ENCODE measurements at regions of chr3 and their contacts with region 1.

Region 1: DNA sequence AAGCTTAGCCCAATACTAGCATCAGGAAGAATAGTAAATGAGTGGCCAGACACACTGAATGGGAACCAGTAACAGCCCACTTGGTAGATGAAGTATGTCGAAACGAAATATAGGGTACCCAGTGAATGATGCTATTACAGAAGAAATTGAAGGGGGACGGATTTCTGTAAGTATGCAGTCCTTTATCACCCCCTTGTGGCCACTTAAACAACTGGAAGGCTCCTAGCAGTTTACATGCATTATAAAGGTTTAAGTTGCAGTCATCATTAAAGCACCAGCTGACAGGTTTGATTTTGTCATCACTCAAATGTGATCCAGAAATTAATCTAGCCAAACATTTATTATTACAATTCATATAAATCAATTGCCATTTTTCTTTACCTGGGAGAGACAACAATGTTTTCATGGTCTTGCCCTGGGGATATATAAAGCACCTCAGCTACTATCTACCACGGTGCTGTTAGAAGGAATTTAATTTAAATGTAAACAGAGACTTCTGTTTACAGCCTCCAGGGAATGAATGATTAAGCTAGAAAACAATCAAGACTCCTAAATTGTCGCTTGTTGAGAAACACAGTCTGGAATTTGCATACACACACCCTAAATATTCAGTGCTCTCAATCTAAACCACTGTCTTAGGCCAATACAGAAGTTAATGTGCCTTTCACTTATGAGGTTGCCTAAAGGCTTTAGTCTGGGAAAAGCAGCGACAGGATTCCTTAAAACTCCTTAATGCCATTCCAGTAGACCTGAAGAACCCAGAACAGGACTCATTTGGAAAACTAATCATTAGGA is 7.8 kb downstream of the EIF1B start:
- DNase-seq: no peak
- ATAC-seq: no peak

Region 2: GRCh38 chr3:39541917-39542329 is 775.3 kb before region 1 on chr3:
- intact Hi-C with region 1: loop called (anchors 5 kb)
- DNase-seq: no peak
- ATAC-seq: no peak

Region 3: GRCh38 chr3:39724233-39724846 is 592.9 kb before region 1 on chr3:
- intact Hi-C with region 1: loop called (anchors 10 kb)
- DNase-seq: no peak
- ATAC-seq: no peak

Region 4: DNA sequence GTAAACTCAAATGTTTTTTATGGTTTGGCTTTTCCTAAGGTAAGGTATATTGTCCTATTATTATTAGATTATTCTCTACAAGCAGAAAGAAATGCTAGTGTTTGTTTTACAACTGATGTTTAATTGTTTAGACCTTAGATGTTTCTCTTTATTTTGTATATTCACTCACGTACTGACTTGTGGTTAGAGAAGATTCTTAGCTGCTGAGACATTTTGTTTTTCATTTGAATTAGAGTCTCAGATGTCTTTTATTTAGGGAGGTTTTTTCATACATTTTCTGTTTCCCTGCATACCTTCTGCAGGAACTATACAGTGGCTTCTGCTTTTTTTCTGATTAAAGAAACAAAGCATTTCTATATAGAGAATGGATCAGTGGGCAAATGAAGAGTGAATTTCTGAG is 397.0 kb before region 1 on chr3:
- intact Hi-C with region 1: no loop called
- DNase-seq: no peak
- ATAC-seq: no peak

Region 5: DNA sequence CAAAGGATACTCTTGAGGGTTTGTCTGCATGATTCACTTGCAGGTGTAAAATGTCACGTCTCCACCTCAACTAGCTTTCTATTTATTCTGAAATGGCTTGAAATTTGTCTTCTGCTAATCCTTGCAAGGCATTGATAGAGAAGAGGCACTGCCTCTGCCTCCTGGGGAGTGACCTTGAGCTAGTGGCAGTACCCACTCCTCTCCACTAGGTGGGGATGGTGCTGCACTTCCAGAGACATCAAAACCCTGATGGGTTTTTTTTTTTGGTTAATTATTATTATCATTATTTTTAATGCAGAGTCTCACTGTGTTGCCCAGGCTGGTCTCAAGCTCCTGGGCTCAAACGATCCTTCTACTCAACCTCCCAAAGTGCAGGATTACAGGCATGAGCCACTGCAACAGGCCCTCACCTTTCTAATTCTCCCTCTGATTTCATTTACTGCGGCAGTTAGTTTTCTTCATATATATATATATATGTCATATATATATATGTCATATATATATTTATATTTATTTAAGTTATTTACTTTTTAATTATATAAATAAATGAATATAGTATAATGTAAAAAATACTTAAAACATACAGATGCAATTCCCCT is 125.3 kb before region 1 on chr3:
- intact Hi-C with region 1: loop called (anchors 1 kb)
- DNase-seq: peak; percentile 60
- ATAC-seq: peak; percentile 58

Region 6: GRCh38 chr3:40240921-40241320 is 76.3 kb before region 1 on chr3:
- intact Hi-C with region 1: no loop called
- DNase-seq: no peak
- ATAC-seq: no peak

Region 7: DNA sequence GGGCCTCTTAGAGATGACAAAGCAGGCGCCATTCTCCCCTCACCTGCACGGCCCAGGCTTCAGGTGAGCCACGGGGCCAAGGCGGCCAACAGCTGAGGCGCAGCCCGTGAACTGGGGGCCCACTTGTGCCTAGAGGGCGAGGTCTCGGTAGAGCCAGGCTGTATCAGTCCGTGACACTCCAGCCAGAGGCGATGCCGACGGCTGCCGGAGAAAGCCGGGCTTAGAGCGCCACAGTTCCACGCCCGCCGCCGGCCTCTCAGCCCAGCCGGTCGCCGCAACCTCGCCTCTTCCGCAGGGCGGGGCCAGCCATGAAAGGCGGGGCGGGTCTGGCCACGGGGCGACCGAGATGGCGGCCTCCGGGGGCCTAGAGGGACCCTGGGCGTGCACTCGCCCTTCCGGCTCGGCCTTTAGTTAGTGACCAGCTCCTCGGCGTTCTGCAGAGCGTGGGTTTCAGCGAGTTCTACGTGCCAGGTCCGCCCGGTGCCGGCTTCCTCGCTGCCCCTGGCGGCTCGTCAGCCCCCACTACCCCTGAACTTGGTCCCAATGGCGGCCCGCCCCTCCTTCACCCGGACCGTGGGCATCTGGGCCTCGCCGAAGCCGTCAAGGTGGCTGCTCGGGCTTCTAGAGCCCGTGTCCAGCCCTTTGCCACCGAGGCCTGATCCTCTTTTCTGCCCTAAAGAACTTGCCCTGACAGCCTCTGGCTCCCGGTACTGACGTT is 207.5 kb after region 1 on chr3 and contains the start of gene ZNF621:
- intact Hi-C with region 1: loop called (anchors 10 kb)
- DNase-seq: peak; percentile 97
- ATAC-seq: peak; percentile 100
- total RNA-seq, gene ZNF621: 10.5 TPM